Activated T-helper 1 cell treated with anti-CD3 and anti-CD28 coated beads, Interleukin-12 subunit alpha, Interleukin-12 subunit beta, Interleukin-2, Interleukin-4 antibody, amounts not matched to agents 30 ng/mL and 10 ng/mL and 1 ng/mL, durations not matched to agents 14 hours and 24 hours and 36 hours (primary cell): ENCODE measurements at regions of chr19 and their contacts with region 1.

Region 1: DNA sequence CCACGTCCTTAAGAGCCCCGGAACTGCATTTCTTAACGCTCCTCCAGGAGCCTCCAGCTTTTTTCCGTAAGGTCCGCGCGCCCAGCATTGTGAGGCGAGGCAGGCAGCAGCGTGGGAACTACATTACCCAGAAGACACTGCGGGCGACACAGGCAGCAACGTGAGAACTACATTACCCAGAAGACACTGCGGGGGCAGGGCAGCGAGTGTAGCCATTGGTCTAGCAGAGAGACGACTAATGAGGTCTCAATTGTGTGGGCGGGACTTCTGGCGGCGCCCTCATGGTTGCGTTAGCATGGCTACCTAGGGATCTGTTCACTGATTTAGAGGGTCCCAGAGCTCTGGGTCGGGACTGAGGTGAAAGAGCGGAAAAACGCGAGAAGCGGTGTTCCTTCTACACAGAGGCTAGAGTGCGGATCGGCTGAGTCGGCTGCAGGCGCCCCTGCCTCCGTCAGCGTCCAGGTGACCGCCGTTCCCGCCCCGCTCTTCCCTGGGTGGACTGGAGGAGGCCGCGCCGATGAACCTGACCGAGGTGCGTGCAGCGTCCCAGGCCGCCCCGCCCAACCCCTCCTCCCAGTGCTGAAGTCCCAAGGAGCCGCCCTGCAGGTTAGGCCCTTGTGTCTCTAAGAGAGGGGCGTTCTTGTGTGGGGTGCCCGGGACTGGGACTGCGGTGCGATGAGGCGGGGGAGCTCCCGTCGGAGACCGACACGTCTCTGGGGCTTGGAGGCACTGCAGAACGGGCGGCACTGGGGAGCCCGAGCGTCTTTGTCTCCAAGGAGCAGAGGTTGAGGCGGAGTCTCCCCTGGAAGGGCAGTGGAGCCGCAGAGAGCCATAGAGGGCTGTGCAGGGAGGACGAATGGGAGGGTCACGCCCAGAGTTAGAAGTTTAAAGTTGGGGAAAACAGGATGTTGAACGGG is at the start of gene ZNF749:
- DNase-seq: peak; percentile 95
- H3K4me3 Mint-ChIP-seq: peak within 1 kb of the TSS; percentile 93
- H3K27ac Mint-ChIP-seq: peak within 1 kb of the TSS; percentile 95
- H3K4me1 Mint-ChIP-seq: peaks cover 23% of the 10 kb centered on the region
- H3K27me3 Mint-ChIP-seq: no peaks in the 10 kb centered on the region
- total RNA-seq, gene ZNF749: 21.5 and 22.0 TPM in 2 replicates

Region 2: DNA sequence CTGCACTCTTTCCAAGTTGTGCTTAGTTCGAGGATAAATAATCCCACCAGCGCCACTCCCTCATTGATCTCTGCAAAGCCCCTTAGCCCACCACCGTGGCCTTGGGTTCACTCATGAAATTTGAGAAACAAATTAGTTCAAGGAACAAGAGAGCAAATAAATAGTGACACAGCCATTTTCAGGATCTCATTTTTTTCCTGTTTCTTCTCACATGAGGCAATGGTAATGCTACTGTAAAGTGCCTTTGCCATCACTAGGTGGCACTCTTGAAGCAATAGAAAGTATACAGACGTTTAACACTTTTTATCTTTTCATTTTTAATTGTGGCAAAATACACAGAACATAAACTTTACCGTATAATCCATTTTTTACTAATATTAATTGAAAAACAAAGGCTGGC is 686.9 kb before region 1 on chr19:
- intact Hi-C with region 1: no loop called
- DNase-seq: no peak
- H3K4me3 Mint-ChIP-seq: no peak overlapping the region
- H3K27ac Mint-ChIP-seq: no peak overlapping the region
- H3K4me1 Mint-ChIP-seq: no peaks in the 10 kb centered on the region
- H3K27me3 Mint-ChIP-seq: no peaks in the 10 kb centered on the region

Region 3: DNA sequence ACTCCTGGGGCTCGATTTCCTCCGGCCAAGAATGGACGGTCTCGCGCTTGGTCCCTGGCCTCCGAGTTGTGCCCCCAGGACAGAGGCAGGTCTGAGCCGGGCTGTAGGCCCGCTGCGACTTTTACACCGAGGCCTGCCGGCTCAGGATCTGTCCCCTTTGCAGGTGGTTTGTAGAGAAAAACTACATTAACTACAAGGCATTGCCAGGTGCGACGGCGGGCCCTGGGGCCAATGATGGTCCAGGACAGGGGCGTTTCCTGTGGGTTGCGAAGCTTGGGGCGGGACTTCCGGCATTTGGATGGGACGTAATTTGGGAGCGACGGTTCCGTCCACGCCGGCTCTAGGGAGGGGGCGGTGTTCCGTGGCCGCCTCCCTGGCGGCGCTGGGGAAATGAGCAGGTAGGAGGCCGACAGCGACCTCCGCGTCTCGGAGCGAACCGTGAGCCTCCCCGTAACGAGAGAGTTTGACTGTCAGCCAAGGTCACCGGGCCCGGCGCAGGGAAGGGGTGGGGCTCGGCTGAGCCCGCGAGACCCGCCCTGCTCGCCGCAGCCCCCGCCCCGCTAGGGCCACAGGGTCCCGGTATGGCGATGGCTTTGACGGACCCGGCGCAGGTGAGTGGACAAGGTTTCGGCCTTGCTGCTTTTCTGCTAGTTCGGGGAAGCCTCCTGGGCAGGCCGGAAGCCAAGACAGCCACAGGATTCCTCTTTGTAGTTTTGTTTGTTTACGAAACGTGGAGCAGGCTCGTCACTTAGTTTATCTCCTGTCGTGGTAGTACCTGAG is 194.8 kb before region 1 on chr19 and contains the start of gene ZNF805:
- intact Hi-C with region 1: loop called (anchors 1 kb)
- DNase-seq: peak; percentile 93
- H3K4me3 Mint-ChIP-seq: peak within 1 kb of the TSS; percentile 92
- H3K27ac Mint-ChIP-seq: peak within 1 kb of the TSS; percentile 97
- H3K4me1 Mint-ChIP-seq: peaks cover 14% of the 10 kb centered on the region
- H3K27me3 Mint-ChIP-seq: no peaks in the 10 kb centered on the region
- total RNA-seq, gene ZNF805: 6.9 and 8.4 TPM in 2 replicates

Region 4: DNA sequence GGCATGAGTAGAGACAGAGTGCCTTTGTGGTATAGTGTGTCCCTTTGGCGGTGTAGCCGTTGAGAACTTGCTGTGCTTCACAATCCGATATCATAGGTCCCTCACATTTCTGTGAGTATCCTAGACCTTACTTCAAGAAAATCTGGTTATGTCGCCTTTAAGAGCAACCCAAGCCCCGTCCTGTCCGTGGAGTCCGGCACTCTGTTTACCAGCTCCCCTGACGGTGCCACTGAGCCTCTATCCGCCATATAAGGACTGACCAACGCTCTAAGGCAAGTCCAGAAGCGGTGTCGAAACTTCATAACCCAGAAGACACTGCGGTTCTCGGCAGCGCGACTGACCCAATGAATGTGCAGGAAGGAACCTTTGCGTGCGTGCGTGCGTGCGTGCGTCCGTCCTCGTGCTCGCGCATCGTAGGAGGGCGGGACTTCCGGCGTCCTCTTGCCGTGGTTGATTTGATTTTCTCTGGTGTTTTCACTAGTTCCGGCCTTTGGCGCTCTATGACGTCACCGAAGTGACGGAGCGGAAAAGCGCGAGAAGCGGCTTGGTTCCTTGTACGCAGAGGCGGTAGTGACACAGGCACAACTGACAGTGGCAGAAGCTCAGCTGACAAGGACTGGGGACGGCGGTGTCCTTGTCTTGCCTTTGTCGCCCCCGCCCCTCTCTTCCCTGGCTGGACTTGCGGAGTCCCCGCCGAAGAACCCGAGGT is 72.2 kb before region 1 on chr19 and contains the starts of genes TRAPPC2B and ZNF547:
- intact Hi-C with region 1: loop called (anchors 1 kb)
- DNase-seq: peak; percentile 98
- H3K4me3 Mint-ChIP-seq: peak within 1 kb of the TSS; percentile 89
- H3K27ac Mint-ChIP-seq: peak within 1 kb of the TSS; percentile 97
- H3K4me1 Mint-ChIP-seq: peaks cover 17% of the 10 kb centered on the region
- H3K27me3 Mint-ChIP-seq: no peaks in the 10 kb centered on the region
- total RNA-seq, gene TRAPPC2B: 3.8 and 4.7 TPM in 2 replicates
- total RNA-seq, gene ZNF547: 0.69 and 0.93 TPM in 2 replicates

Region 5: GRCh38 chr19:57527136-57527881 is 92.0 kb after region 1 on chr19 and contains the start of gene ZNF549:
- intact Hi-C with region 1: loop called (anchors 1 kb)
- DNase-seq: peak; percentile 85
- H3K4me3 Mint-ChIP-seq: peak within 1 kb of the TSS; percentile 93
- H3K27ac Mint-ChIP-seq: peak within 1 kb of the TSS; percentile 76
- H3K4me1 Mint-ChIP-seq: peaks cover 20% of the 10 kb centered on the region
- H3K27me3 Mint-ChIP-seq: peaks cover 2% of the 10 kb centered on the region
- total RNA-seq, gene ZNF549: 3.6 and 4.2 TPM in 2 replicates

Region 6: GRCh38 chr19:57632987-57633831 is 197.9 kb after region 1 on chr19 and contains the start of gene ZNF211:
- intact Hi-C with region 1: loop called (anchors 1 kb)
- DNase-seq: peak; percentile 80
- H3K4me3 Mint-ChIP-seq: peak within 1 kb of the TSS; percentile 89
- H3K27ac Mint-ChIP-seq: peak within 1 kb of the TSS; percentile 78
- H3K4me1 Mint-ChIP-seq: peaks cover 19% of the 10 kb centered on the region
- H3K27me3 Mint-ChIP-seq: no peaks in the 10 kb centered on the region
- total RNA-seq, gene ZNF211: 8.3 and 8.4 TPM in 2 replicates

Region 7: DNA sequence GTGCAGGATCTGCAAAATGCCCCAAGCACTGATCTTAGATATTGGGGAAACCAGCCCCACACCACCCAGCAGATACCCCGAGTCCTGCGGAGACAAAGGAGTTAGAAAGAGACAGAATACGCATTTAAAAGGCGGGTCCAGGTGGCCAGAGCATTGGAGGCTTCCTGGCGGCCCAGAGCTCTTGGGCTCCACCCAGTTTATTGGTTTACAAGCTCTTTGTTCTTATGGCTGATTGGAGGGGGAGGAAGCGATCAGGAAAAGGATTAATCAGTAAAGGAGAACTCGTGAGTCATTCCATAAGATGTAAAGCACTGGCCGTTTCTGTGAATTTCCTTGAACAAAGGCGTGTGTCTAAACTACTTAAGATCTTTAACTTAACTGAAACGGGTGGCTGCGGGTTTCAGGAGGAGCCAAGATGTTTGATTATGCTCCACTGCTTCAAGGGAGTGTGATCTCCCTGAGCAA is 415.3 kb after region 1 on chr19:
- intact Hi-C with region 1: loop called (anchors 1 kb)
- DNase-seq: no peak
- H3K4me3 Mint-ChIP-seq: peak overlapping the region; percentile 92
- H3K27ac Mint-ChIP-seq: peak overlapping the region; percentile 93
- H3K4me1 Mint-ChIP-seq: peaks cover 17% of the 10 kb centered on the region
- H3K27me3 Mint-ChIP-seq: no peaks in the 10 kb centered on the region

Region 8: GRCh38 chr19:58278157-58279041 is 843.1 kb after region 1 on chr19 and contains the start of gene ZNF8:
- intact Hi-C with region 1: loop called (anchors 1 kb)
- DNase-seq: peak; percentile 97
- H3K4me3 Mint-ChIP-seq: peak within 1 kb of the TSS; percentile 92
- H3K27ac Mint-ChIP-seq: peak within 1 kb of the TSS; percentile 93
- H3K4me1 Mint-ChIP-seq: peaks cover 23% of the 10 kb centered on the region
- H3K27me3 Mint-ChIP-seq: no peaks in the 10 kb centered on the region
- total RNA-seq, gene ZNF8: 4.0 and 4.4 TPM in 2 replicates